Common myeloid progenitor, CD34-positive (primary cell): ENCODE measurements at regions of chr3 and their contacts with region 1.

Region 1: GRCh38 chr3:126679318-126679751 is 24.4 kb upstream of the TXNRD3 start:
- DNase-seq: peak; percentile 65 to 80 (median 80)
- H3K4me3 ChIP-seq: peak overlapping the region in 3 of 7 experiments; percentile 16 to 58 (median 23)
- H3K27ac ChIP-seq: no peak overlapping the region
- H3K4me1 ChIP-seq: peaks cover 0 to 44% (median 33%) of the 10 kb centered on the region in 4 experiments
- H3K27me3 ChIP-seq: no peaks in the 10 kb centered on the region

Region 2: DNA sequence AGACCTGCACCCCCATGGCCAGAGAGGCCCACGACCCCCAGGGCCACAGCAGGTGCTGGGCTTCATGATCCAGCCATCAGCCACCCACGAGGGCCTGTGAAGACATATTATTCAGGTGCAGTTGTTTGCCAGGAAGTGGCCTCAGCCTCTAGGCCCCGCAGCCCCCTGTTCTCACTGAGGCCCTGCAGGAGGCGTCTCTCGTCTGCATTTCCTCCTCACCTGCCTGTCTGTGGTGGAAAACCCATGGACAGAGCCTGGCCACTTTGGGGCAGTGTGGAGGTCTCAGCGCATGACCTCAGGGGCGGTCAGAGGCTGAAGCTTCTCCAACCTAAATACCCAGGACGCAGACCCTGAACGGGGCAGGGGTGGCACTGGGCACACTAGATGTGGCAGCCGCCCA is 180.4 kb before region 1 on chr3:
- CTCF ChIA-PET with region 1: no interaction called
- POLR2A ChIA-PET with region 1: no interaction called
- DNase-seq: no peak
- H3K4me3 ChIP-seq: no peak overlapping the region
- H3K27ac ChIP-seq: no peak overlapping the region
- H3K4me1 ChIP-seq: peaks cover 0 to 24% (median 15%) of the 10 kb centered on the region in 4 experiments
- H3K27me3 ChIP-seq: no peaks in the 10 kb centered on the region

Region 3: DNA sequence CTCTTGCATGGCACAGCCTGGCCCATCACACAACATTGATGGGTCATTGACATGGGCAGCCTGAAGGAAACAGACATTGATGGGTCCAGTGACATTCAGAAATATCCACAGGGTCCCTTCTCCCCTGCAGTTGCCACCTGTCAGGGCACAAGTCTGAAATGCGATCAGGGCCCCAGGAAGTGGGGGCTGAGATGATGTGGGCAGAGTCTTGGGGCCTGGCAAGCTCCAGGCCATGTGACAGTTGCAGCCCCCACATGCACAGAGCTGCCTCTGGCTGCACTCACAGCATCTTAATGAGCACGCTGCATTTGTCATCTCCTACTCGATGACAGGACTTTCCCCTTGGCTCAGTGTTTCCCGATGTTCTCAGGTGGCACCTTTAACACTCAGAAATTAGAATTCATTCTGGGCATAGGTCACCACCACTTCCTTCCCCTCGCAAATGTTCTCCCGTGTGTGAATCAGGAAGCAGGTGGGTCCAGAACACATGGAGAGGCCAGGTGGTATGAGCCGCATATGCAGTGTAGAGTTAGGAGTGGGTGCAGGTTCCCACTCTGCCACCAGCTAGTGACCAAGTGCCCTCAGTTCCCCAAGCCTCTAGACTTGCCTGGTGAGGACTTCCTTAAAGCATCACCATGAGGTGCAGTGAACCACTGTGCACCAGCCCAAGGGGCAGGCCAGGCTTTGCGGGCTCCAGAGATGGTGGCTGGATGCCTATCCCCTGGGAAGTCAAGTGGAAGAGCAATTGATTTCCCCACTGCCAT is 22.8 kb before region 1 on chr3:
- CTCF ChIA-PET with region 1: interaction called, 12 read pairs
- POLR2A ChIA-PET with region 1: no interaction called
- DNase-seq: peak in 2 of 3 donors; percentile 39 to 48
- H3K4me3 ChIP-seq: no peak overlapping the region
- H3K27ac ChIP-seq: no peak overlapping the region
- H3K4me1 ChIP-seq: peaks cover 4 to 28% (median 12%) of the 10 kb centered on the region in 4 experiments
- H3K27me3 ChIP-seq: peaks cover 0 to 2% (median 0%) of the 10 kb centered on the region in 5 experiments

Region 4: GRCh38 chr3:127455541-127456450 is 776.5 kb after region 1 on chr3:
- CTCF ChIA-PET with region 1: interaction called, 11 read pairs
- POLR2A ChIA-PET with region 1: no interaction called
- DNase-seq: peak; percentile 56 to 75 (median 74)
- H3K4me3 ChIP-seq: peak overlapping the region in 1 of 7 experiments; percentile 6
- H3K27ac ChIP-seq: no peak overlapping the region
- H3K4me1 ChIP-seq: peaks cover 0 to 15% (median 7%) of the 10 kb centered on the region in 4 experiments
- H3K27me3 ChIP-seq: peaks cover 4 to 84% (median 35%) of the 10 kb centered on the region in 5 experiments

Region 5: GRCh38 chr3:127547761-127548605 is 868.6 kb after region 1 on chr3:
- CTCF ChIA-PET with region 1: interaction called, 12 read pairs
- POLR2A ChIA-PET with region 1: no interaction called
- DNase-seq: peak; percentile 62 to 84 (median 83)
- H3K4me3 ChIP-seq: peak overlapping the region; percentile 23 to 81 (median 62)
- H3K27ac ChIP-seq: no peak overlapping the region
- H3K4me1 ChIP-seq: peaks cover 0 to 18% (median 12%) of the 10 kb centered on the region in 4 experiments
- H3K27me3 ChIP-seq: peaks cover 0 to 5% (median 0%) of the 10 kb centered on the region in 5 experiments